ENCODE measurements at regions of chr16 and their contacts with region 1.

Region 1: DNA sequence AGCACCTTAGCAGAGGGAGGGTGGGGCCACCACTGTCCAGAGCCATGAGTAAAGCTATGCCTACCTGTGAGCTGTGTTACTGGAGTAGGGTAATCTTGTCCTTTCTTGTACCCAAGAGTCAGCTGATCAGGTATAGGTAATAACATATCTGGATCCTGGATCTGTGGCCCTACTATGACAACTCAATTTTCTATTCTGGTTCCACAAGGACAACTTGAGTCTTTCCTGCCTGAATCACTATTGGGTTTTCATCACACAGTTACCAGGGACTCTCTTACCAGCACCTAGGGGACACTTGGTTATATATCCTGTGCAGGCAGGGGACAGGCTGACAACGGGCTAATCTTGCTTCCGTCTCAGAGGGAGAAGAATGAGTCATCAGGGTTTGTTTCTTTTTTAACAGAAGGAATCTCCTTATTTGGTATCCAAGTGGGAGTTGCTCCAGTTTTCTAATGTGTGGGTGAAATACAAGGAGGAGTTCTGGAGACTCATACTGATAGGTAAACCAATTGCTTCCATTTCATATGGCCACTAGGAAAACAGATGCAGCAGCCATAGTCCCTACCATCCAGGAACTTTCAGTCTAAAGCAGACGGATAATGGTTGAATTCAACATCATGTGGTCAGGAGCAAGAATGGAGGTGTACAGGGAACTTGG is 6.8 kb downstream of the ZNF267 start:
- DNase-seq: peak; percentile 46
- H3K4me3 Mint-ChIP-seq: peak overlapping the region; percentile 96
- H3K27ac Mint-ChIP-seq: peak overlapping the region; percentile 84
- H3K4me1 Mint-ChIP-seq: peaks cover 77% of the 10 kb centered on the region
- H3K27me3 Mint-ChIP-seq: no peaks in the 10 kb centered on the region

Region 2: GRCh38 chr16:29995911-29996772 is 1884.3 kb before region 1 on chr16 and contains the start of gene INO80E:
- intact Hi-C with region 1: no loop called
- DNase-seq: peak; percentile 99
- H3K4me3 Mint-ChIP-seq: peak within 1 kb of the TSS; percentile 98
- H3K27ac Mint-ChIP-seq: peak within 1 kb of the TSS; percentile 96
- H3K4me1 Mint-ChIP-seq: peaks cover 39% of the 10 kb centered on the region
- H3K27me3 Mint-ChIP-seq: no peaks in the 10 kb centered on the region
- total RNA-seq, gene INO80E: 128 and 137 TPM in 2 replicates

Region 3: GRCh38 chr16:31727553-31727952 is 152.9 kb before region 1 on chr16:
- intact Hi-C with region 1: no loop called
- DNase-seq: no peak
- H3K4me3 Mint-ChIP-seq: no peak overlapping the region
- H3K27ac Mint-ChIP-seq: no peak overlapping the region
- H3K4me1 Mint-ChIP-seq: no peaks in the 10 kb centered on the region
- H3K27me3 Mint-ChIP-seq: no peaks in the 10 kb centered on the region

Region 4: GRCh38 chr16:31899505-31899904 is 19.1 kb after region 1 on chr16:
- intact Hi-C with region 1: loop called (anchors 2 kb)
- DNase-seq: no peak
- H3K4me3 Mint-ChIP-seq: peak overlapping the region; percentile 1
- H3K27ac Mint-ChIP-seq: peak overlapping the region; percentile 61
- H3K4me1 Mint-ChIP-seq: peaks cover 16% of the 10 kb centered on the region
- H3K27me3 Mint-ChIP-seq: peaks cover 1% of the 10 kb centered on the region